ENCODE measurements at regions of chr1 and their contacts with region 1.

Region 1: GRCh38 chr1:96966536-96967138 is 245.1 kb downstream of the PTBP2 start:
- DNase-seq: peak; percentile 78
- H3K4me3 ChIP-seq: no peak overlapping the region
- H3K27ac ChIP-seq: no peak overlapping the region
- H3K4me1 ChIP-seq: peaks cover 0 to 18% (median 2%) of the 10 kb centered on the region in 4 donors
- H3K27me3 ChIP-seq: no peaks in the 10 kb centered on the region
- CTCF ChIP-seq: peak; percentile 84 to 93 (median 93)
- EP300 ChIP-seq: no peak
- POLR2A ChIP-seq: no peak

Region 2: GRCh38 chr1:96979304-96980268 is 12.9 kb after region 1 on chr1:
- in situ Hi-C with region 1: no loop called
- intact Hi-C with region 1: no loop called
- DNase-seq: no peak
- H3K4me3 ChIP-seq: no peak overlapping the region
- H3K27ac ChIP-seq: no peak overlapping the region
- H3K4me1 ChIP-seq: no peaks in the 10 kb centered on the region
- H3K27me3 ChIP-seq: no peaks in the 10 kb centered on the region
- CTCF ChIP-seq: no peak
- EP300 ChIP-seq: no peak
- POLR2A ChIP-seq: no peak

Region 3: GRCh38 chr1:97277891-97278654 is 311.4 kb after region 1 on chr1:
- in situ Hi-C with region 1: no loop called
- intact Hi-C with region 1: no loop called
- DNase-seq: no peak
- H3K4me3 ChIP-seq: no peak overlapping the region
- H3K27ac ChIP-seq: no peak overlapping the region
- H3K4me1 ChIP-seq: peaks cover 0 to 5% (median 1%) of the 10 kb centered on the region in 4 donors
- H3K27me3 ChIP-seq: no peaks in the 10 kb centered on the region
- CTCF ChIP-seq: no peak
- EP300 ChIP-seq: no peak
- POLR2A ChIP-seq: no peak

Region 4: DNA sequence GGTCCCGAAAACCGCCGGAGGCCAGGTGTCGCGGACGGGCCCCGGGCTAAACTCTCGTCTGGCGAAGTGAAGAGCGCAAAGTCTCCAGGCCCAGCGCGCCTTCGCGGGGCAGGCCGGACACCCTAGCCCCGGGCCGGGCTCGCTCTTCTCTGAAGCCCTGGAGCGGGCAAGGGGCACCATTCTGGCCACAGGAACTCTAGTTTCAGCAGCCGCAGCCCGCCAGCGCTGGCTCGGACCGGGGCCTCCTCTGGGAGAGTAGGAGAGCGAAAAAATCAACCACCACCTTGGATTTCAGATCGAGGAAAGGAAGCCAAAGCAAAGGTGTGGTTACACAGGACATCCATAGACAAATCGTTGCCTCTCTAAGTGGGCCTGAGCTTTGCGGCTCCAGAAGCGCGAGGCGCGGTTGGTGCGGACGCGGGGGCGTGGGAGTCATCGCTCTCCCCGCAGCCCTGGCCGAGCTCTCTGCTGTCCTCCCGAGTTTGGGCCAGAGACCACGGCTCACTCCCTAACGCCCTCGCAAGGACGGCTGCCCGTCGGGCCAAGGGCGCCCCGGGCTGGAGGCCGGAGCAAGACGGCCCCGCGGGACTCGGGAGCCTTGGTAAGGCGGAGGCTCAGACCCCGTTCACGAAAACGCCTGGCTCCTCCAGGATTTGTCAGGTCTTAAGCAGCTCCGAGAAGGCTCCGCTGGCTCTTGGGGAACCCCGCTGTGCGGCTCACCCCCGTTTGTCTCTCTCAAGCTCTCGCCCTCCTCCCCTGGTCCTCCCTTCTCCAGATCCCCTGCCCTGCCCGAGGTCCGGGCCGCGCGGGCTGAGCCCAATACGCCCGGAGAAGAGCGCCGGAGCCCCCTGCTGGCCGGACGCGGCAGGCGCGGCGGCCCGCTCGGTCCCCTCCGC is 1087.1 kb after region 1 on chr1:
- in situ Hi-C with region 1: loop called (anchors 5 to 25 kb)
- intact Hi-C with region 1: no loop called
- DNase-seq: peak; percentile 32
- H3K4me3 ChIP-seq: peak overlapping the region; percentile 29 to 58 (median 34)
- H3K27ac ChIP-seq: no peak overlapping the region
- H3K4me1 ChIP-seq: peaks cover 5 to 12% (median 9%) of the 10 kb centered on the region in 4 donors
- H3K27me3 ChIP-seq: peaks cover 77% of the 10 kb centered on the region
- CTCF ChIP-seq: peak; percentile 31 to 90 (median 85)
- EP300 ChIP-seq: no peak
- POLR2A ChIP-seq: no peak

Measured in transverse colon (tissue), 4 donors.